Activated CD4-positive, alpha-beta T cell treated with anti-CD3 and anti-CD28 coated beads, Interleukin-2, amount 10 ng/mL, durations not matched to agents 24 days and 14 days (primary cell): ENCODE measurements at regions of chr17 and their contacts with region 1.

Region 1: DNA sequence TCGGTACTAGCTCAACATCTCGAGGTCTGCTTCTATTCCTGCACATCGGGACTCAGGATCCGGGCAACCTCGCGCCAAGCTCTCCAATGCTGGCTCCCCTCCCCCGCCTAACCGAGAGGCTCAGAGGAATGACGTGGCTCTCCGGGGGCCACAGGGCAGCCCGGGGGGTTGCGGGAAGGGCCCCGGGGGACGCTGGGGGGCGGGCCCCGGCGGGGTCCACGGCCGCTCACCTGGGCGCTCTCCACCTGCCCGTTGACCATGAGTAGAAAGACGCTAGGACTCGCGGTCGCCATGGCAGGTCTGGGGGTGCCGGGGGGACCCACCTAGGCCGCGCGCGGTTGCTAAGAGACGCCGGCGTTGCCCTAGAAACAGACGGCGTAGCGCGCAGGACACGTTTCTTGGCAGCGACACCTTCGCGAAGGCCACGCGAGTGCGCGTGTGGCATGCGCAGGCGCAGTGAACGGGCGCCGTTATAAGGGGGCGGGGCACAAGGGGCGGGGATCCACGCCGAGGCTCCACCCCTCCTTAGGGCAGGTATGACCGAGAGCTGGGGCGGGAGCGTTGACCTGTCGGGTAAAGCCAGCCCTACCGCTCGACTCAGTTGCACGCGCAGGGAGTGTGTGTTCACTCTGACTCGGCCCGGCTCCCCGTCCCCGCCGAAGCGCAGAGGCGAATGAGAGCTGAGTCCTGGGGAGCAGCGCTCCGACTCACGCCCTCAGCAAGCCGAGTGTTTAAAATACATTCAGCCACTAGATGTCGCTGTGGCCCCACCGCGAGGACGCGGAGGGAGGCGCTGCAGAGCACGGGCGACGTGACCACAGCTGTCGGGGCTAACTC is at the start of gene B9D1:
- DNase-seq: peak; percentile 97
- H3K4me3 Mint-ChIP-seq: peak within 1 kb of the TSS; percentile 91
- H3K27ac Mint-ChIP-seq: peak within 1 kb of the TSS; percentile 58
- H3K4me1 Mint-ChIP-seq: peaks cover 15% of the 10 kb centered on the region
- H3K27me3 Mint-ChIP-seq: peaks cover 15% of the 10 kb centered on the region
- total RNA-seq, gene B9D1: 6.1 and 6.3 TPM in 2 replicates

Region 2: DNA sequence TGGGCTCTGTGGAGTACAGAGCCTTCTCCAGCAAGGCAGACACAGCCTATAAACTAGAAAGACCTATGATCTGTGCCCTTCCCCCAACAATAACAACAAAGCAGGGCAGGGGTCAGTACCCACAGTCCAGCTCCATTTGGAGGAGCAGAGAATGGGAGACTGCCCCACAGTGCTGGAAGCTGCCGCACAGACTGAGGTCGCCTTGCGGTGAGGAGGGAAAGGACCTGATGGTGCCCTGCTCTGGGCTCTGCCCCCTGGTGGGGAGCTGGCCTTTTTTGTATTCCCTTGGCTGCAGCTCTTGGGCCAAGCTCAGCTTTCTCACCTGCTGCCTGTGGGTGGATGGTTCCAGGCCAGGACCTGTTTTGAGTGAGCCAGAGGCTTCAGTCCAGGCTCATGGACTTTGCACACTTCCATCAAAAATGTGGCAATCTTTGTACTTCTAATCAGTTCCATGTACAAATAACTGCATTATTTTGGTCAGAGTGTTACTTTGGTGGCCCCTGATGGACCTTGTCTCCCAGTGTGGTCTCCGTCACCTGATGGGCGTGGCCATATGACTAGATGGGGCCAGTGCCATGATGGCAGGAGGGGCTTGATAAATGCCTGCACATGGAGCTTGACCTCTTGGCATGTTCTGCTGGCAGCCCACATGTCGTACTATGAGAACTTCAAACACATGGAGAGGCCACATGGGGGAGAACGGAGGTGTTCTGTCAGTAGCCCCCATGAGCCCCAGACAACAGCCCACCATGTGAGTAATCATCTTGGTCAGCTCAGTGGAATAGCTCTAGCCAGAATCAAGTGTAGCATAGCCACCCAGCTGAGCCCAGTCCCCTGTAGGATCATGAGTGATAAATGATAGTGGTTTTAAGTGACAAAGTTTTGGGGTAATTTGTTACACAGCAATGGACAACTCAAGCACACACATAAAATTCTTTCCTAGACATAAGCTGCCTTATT is 24.2 kb before region 1 on chr17:
- intact Hi-C with region 1: no loop called
- DNase-seq: peak; percentile 89
- H3K4me3 Mint-ChIP-seq: no peak overlapping the region
- H3K27ac Mint-ChIP-seq: no peak overlapping the region
- H3K4me1 Mint-ChIP-seq: no peaks in the 10 kb centered on the region
- H3K27me3 Mint-ChIP-seq: peaks cover 20% of the 10 kb centered on the region

Region 3: GRCh38 chr17:19377602-19378392 is 15.3 kb after region 1 on chr17:
- intact Hi-C with region 1: loop called (anchors 1 kb)
- DNase-seq: peak; percentile 99
- H3K4me3 Mint-ChIP-seq: peak overlapping the region; percentile 98
- H3K27ac Mint-ChIP-seq: peak overlapping the region; percentile 98
- H3K4me1 Mint-ChIP-seq: peaks cover 21% of the 10 kb centered on the region
- H3K27me3 Mint-ChIP-seq: no peaks in the 10 kb centered on the region

Region 4: GRCh38 chr17:19447085-19447583 is 84.6 kb after region 1 on chr17:
- intact Hi-C with region 1: loop called (anchors 1 kb)
- DNase-seq: peak; percentile 93
- H3K4me3 Mint-ChIP-seq: no peak overlapping the region
- H3K27ac Mint-ChIP-seq: peak overlapping the region; percentile 7
- H3K4me1 Mint-ChIP-seq: peaks cover 3% of the 10 kb centered on the region
- H3K27me3 Mint-ChIP-seq: peaks cover 24% of the 10 kb centered on the region

Region 5: GRCh38 chr17:19507775-19508576 is 145.5 kb after region 1 on chr17:
- intact Hi-C with region 1: loop called (anchors 2 kb)
- DNase-seq: peak; percentile 95
- H3K4me3 Mint-ChIP-seq: peak overlapping the region; percentile 86
- H3K27ac Mint-ChIP-seq: peak overlapping the region; percentile 86
- H3K4me1 Mint-ChIP-seq: peaks cover 7% of the 10 kb centered on the region
- H3K27me3 Mint-ChIP-seq: peaks cover 17% of the 10 kb centered on the region

Region 6: DNA sequence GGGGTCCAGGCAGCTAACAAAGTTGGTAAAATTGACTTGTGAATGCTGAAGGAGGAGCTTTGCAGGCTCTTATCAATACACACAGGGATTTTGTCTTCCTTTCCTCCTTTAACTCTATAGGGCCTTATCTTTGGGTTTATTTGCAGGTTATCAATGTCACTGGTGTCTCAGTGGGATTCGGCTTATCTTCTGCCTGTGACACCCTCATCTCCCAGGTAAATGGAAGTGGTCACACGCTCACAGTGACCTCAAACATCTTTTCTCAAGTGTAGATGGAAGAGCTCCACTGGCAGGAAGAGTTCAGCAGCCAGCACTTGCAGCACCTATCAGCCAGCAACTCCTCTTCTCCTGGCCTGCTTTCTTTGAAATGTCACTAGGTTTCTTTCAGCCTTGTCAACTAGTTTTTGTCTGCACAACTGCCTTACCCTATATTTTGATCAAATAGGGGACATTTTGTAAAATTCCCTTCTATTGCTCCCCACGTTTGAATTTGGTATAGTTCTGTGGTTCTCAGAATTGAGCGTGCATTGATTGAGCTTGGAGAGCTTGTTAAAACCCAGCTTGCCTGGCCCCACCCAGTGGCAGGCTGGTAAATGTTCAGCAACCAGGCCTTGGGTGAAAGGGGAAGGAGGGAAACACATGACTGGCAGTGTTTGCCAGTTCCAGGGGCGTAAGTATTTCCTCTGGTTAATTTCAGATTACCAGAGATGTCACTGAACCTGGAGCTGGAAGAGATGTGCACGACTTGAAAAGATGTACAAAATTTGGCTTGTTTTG is 184.0 kb after region 1 on chr17:
- intact Hi-C with region 1: no loop called
- DNase-seq: no peak
- H3K4me3 Mint-ChIP-seq: no peak overlapping the region
- H3K27ac Mint-ChIP-seq: no peak overlapping the region
- H3K4me1 Mint-ChIP-seq: no peaks in the 10 kb centered on the region
- H3K27me3 Mint-ChIP-seq: no peaks in the 10 kb centered on the region

Region 7: DNA sequence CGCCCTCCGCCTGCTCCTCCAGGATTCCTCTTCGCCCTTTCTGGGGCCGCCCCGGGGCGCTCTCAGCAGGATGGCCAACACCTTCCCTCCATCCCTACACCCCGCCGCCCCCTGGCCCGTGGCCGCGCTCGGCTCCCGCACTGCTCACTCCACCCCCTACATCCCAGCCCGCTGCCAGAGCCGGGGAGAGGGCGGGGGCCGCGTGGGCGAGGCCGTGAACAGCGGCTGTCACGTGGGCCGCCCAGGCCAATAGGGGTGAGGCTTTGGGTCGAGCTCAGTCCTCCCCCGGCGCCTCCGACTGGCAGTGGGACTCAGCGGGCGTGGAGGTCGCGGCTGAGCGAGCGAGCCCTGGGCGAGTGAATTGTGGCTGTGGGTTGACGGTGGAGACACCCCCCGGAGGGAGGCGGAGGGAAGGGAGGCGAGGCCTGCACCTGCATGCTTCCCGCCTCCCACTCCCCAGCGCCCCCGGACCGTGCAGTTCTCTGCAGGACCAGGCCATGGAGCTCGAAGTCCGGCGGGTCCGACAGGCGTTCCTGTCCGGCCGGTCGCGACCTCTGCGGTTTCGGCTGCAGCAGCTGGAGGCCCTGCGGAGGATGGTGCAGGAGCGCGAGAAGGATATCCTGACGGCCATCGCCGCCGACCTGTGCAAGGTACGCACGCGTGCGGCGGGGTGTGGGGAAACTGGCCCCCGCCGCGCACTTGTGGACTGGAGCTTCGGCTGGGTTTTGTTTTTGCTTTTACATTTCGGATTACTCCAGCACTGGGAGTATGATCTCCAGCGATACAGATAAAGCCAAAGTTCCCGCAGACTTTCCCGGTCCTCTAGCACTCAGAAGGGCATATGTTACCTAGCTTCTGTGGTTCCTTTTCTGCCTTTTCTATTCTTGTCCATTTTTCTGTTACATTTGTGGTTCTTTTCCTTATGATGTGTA is 286.2 kb after region 1 on chr17 and contains the start of gene ALDH3A2:
- intact Hi-C with region 1: loop called (anchors 5 kb)
- DNase-seq: peak; percentile 98
- H3K4me3 Mint-ChIP-seq: peak within 1 kb of the TSS; percentile 89
- H3K27ac Mint-ChIP-seq: peak within 1 kb of the TSS; percentile 91
- H3K4me1 Mint-ChIP-seq: peaks cover 36% of the 10 kb centered on the region
- H3K27me3 Mint-ChIP-seq: peaks cover 9% of the 10 kb centered on the region
- total RNA-seq, gene ALDH3A2: 32.8 and 34.3 TPM in 2 replicates

Region 8: DNA sequence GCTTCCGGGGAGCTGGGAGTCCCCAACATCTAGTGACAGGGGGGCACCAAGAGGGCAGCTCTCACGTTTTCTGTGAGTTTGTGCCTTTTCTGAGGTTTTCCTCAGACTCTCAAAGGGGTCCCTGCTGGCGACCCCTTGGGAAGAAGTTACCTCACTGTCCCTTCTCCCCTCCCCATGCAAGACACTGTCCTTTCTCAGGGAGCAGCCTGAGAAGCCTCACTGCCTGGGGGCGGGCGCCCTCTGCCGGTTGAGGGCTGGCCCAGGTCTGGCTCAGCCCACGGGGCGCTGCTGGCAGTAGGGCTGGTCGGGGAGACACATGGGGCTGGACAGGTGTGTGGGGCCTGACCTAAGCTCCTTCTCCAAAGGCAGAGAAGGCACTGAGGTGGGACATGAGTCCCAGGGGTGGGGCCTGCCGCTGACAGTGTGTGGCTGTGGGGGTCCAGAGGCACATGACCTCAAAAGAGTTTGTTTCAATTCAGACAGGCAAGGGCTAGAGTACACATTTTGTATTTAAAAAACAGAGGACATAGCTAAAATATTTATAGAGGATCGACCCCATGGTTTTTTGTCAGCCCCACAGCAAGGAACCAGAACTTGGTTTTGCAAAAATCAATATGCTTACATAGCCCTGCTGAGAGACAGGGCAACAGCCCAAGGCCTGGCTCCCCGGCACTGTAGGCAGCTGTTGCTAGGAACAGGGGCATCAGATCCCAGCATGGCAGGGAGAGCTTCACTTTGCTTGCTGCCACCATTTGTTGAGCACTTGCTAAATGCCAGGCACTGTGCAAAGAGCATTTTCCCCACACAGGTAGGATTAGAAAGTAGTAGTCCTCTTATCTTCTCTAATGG is 404.2 kb after region 1 on chr17:
- intact Hi-C with region 1: loop called (anchors 2 kb)
- DNase-seq: peak; percentile 94
- H3K4me3 Mint-ChIP-seq: no peak overlapping the region
- H3K27ac Mint-ChIP-seq: peak overlapping the region; percentile 62
- H3K4me1 Mint-ChIP-seq: peaks cover 24% of the 10 kb centered on the region
- H3K27me3 Mint-ChIP-seq: peaks cover 1% of the 10 kb centered on the region